Activated T-helper 2 cell treated with anti-CD3 and anti-CD28 coated beads, Interferon-gamma antibody, Interleukin-2, Interleukin-4, amounts not matched to agents 10 μg/mL and 5 μg/mL and 100 μg/mL, durations not matched to agents 14 hours and 24 hours and 36 hours (primary cell): ENCODE measurements at regions of chr1 and their contacts with region 1.

Region 1: DNA sequence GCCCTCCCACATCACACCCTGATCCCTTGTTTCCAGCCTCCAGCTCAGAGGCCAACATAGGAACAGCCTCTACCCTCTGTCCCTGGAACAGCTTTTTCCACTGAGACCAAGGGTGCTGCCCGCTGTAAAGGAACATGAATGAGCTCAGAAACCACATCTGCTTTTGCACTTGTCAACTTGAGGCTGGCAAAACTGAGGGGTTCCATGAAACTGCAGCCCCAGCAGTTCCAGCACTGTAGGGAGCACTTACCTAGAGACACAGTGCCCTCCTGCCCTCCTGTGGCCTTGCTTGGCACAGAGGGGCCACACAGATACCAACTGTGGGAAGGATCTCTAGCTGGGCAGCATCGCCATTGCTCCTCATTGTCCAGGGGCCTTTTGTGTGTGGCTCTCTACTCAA is 51.7 kb downstream of the ITPKB start:
- DNase-seq: no peak
- H3K4me3 Mint-ChIP-seq: no peak overlapping the region
- H3K27ac Mint-ChIP-seq: peak overlapping the region; percentile 77
- H3K4me1 Mint-ChIP-seq: peaks cover 89% of the 10 kb centered on the region
- H3K27me3 Mint-ChIP-seq: no peaks in the 10 kb centered on the region

Region 2: DNA sequence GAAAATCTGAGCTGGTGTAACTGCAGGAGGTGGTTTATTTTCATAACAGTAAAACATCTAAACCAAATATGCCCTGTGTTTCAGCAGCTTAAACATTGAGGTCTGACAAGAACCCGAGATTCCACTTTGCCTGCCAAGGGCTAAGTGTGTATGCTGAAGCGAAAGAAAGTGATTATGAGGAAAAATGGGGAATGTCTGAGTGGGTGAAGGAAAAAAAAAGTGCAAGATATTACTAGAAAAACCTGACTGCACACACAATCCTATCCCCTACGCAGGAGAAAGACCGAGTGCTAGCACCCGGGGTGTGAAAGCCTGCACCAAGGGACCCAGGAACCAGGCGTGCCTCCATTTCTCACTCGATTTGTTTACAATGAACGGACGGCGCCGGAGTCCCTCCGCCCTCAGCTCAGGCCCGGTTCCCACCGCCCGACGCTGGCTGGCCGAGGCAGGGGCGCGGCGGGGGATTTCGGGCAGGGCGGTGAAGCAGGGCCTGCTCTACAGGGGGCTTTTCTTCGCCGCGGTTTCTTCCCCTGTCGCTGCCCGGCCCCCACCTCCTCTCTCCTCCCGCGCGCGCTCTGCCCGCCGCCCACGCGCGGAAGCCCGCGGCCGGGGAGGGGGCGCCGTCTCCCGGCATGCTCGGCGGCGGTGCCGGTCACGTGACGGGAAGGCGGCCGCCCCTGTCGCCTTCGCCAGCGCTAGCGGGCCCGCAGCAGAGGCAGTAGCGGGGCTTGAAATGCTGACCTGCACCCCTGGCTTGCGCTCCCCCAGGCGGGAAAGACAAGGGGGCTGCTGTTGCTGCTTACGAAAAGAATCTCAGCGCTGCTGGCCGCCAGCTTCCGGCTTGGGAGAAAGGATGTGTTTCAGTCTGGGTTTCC is 15.8 kb after region 1 on chr1:
- intact Hi-C with region 1: loop called (anchors 1 kb)
- DNase-seq: peak; percentile 76
- H3K4me3 Mint-ChIP-seq: peak overlapping the region; percentile 75
- H3K27ac Mint-ChIP-seq: peak overlapping the region; percentile 84
- H3K4me1 Mint-ChIP-seq: peaks cover 59% of the 10 kb centered on the region
- H3K27me3 Mint-ChIP-seq: no peaks in the 10 kb centered on the region